Aorta (tissue), 5 donors: ENCODE measurements at regions of chr3 and their contacts with region 1.

Region 1: DNA sequence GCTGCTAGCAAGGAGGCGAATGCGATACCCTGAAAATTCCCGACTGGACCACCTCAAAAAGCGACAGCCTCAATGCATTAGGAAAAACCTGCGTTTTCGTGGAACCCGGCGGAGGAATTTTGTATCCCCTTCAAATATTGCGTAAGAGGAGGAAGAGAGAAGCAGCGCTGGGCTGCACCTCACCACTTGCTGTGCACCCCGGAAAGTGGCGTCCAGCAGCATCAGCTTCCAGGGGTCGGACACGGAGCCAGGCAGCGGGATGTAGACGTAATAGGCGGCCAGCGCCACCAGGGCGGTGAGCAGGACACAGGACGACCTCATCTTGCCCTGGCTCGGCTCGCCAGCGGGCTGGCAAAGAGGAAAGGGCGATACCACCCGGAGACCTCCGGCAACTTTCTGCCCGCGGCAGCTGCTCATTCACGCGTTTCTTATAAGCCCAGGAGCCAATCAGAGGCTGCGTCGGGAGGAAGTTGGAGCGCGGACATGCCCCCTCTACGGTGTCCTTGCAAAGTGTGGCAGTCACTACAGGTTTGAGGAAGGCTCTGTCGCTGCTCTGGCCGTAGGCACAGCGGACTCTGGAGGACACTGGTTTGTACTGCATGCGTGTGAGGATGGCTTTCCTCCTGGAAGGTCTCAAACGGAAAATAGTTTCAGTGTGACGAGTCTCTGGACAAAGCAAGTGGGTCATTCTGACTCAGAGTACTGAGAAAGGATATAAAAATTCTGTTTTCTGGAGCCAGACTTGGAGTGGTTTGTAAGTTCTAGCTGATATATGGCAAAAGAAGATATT is at the start of gene NCEH1:
- DNase-seq: peak; percentile 94 to 95
- ATAC-seq: peak; percentile 98
- H3K4me3 ChIP-seq: peak within 1 kb of the TSS; percentile 65 to 75
- H3K27ac ChIP-seq: peak within 1 kb of the TSS; percentile 96 to 97
- H3K4me1 ChIP-seq: peaks cover 2 to 6% of the 10 kb centered on the region in 2 donors
- H3K27me3 ChIP-seq: no peaks in the 10 kb centered on the region
- total RNA-seq, gene NCEH1: 10.2 to 12.5 TPM

Region 2: GRCh38 chr3:172749221-172749965 is 38.5 kb after region 1 on chr3:
- intact Hi-C with region 1: loop called in 1 of 2 experiments (anchors 5 kb)
- DNase-seq: no peak
- ATAC-seq: peak; percentile 40
- H3K4me3 ChIP-seq: peak overlapping the region; percentile 84 to 88
- H3K27ac ChIP-seq: peak overlapping the region in 1 of 2 donors; percentile 43
- H3K4me1 ChIP-seq: no peaks in the 10 kb centered on the region
- H3K27me3 ChIP-seq: no peaks in the 10 kb centered on the region